CD4-positive, alpha-beta memory T cell (primary cell): ENCODE measurements at regions of chr22 and their contacts with region 1.

Region 1: DNA sequence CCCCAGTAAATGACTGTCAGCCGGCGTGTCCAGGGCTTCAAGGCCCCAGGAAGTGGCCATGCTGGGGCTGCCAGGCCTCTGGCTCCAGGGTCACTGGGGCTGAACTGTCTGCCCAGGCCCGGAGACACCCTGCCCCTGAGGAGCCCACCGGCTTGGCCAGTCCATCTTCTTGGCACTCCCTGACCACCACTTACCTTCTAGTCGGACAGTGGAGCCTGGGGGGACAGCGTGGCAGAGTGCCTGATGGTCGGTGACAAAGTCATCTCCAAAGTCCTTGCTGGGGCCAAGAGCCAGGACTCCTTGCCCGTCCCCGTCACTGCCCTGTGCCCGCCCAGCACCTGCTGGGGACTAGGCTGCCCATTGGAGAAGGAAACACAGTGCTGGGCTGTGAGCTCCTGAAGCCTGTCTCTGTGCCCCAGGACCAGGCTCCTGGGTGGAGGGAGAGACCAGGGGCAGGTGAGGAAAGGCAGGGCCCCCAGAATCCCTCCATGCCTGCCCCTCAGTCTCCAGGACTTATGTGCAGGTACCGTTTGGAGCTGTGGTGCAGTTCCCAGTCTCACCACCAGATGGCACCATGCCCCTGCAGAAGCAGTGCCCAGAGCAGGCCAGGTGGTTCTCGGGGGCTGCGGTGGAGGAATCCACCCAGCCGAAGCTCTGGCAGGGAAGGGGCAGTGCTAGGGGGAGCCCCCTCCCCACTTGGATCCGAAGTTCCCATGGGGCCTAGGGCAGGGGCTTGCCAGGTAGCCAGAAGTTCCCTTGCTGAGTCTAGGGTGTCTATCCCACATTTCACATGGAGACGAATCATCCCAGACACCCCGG is 6.0 kb upstream of the CCDC188 start:
- DNase-seq: peak; percentile 69 to 85 (median 81)
- H3K4me3 ChIP-seq: no peak overlapping the region
- H3K4me3 Mint-ChIP-seq: no peak overlapping the region
- H3K27ac ChIP-seq: no peak overlapping the region
- H3K27ac Mint-ChIP-seq: no peak overlapping the region
- H3K4me1 ChIP-seq: no peaks in the 10 kb centered on the region
- H3K4me1 Mint-ChIP-seq: peaks cover 0 to 5% (median 2%) of the 10 kb centered on the region in 4 donors
- H3K27me3 ChIP-seq: no peaks in the 10 kb centered on the region
- H3K27me3 Mint-ChIP-seq: peaks cover 0 to 3% of the 10 kb centered on the region in 2 donors

Region 2: GRCh38 chr22:19970479-19971275 is 186.1 kb before region 1 on chr22:
- CTCF ChIA-PET with region 1: interaction called, 3 read pairs
- POLR2A ChIA-PET with region 1: no interaction called
- intact Hi-C with region 1: loop called (anchors 1 kb)
- DNase-seq: peak; percentile 64 to 79 (median 69)
- H3K4me3 ChIP-seq: no peak overlapping the region
- H3K4me3 Mint-ChIP-seq: no peak overlapping the region
- H3K27ac ChIP-seq: no peak overlapping the region
- H3K27ac Mint-ChIP-seq: no peak overlapping the region
- H3K4me1 ChIP-seq: peaks cover 12% of the 10 kb centered on the region
- H3K4me1 Mint-ChIP-seq: peaks cover 0 to 7% (median 5%) of the 10 kb centered on the region in 4 donors
- H3K27me3 ChIP-seq: no peaks in the 10 kb centered on the region
- H3K27me3 Mint-ChIP-seq: no peaks in the 10 kb centered on the region

Region 3: GRCh38 chr22:20238536-20238900 is 81.7 kb after region 1 on chr22:
- CTCF ChIA-PET with region 1: interaction called, 14 read pairs
- POLR2A ChIA-PET with region 1: interaction called, 3 read pairs
- intact Hi-C with region 1: no loop called
- DNase-seq: peak; percentile 40 to 57 (median 43)
- H3K4me3 ChIP-seq: no peak overlapping the region
- H3K4me3 Mint-ChIP-seq: peak overlapping the region in 4 of 8 donors; percentile 33 to 56 (median 44)
- H3K27ac ChIP-seq: peak overlapping the region; percentile 43
- H3K27ac Mint-ChIP-seq: peak overlapping the region in 6 of 7 donors; percentile 10 to 81 (median 54)
- H3K4me1 ChIP-seq: peaks cover 67% of the 10 kb centered on the region
- H3K4me1 Mint-ChIP-seq: peaks cover 6 to 37% (median 21%) of the 10 kb centered on the region in 4 donors
- H3K27me3 ChIP-seq: no peaks in the 10 kb centered on the region
- H3K27me3 Mint-ChIP-seq: no peaks in the 10 kb centered on the region

Region 4: DNA sequence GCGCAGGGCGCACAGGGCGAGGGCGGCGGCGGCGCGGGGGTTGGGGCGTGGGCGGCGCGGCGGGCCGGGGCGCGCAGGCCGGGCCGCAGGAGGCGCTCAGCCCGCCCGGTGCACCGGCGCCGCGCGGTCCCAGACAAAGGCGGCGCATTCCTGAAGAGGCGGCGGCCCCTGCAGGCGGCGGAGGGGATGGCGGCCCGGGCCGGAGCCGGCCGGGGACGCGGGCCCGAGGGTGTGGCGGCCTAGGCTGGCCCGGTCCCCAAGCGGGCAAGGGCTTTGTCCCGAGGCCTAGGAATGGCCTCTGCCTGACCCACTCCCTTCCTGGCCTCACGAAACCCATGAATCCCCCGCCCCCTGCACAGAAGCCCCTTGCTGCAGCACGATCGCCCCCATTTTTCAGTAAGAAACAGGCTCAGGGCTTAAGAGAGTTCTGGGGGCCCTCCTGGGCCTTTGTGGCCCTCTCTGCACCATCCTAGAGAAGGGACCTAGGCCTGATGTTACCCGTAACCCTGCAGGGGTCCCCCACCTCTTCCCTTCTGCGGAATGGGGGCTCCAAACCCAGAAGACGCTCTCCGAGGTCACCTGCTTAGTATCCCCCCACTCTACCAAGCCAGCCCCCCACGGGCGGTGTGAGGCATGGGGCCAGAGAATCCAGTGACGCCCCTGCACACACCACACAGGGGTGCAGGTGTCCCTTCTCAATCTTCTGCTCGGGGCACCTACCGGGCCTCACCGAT is 111.6 kb after region 1 on chr22 and contains the start of gene RTN4R:
- CTCF ChIA-PET with region 1: interaction called, 7 read pairs
- POLR2A ChIA-PET with region 1: no interaction called
- intact Hi-C with region 1: loop called (anchors 1 kb)
- DNase-seq: peak; percentile 38 to 59 (median 46)
- H3K4me3 ChIP-seq: no peak within 1 kb of the TSS
- H3K4me3 Mint-ChIP-seq: peak within 1 kb of the TSS; percentile 68 to 84 (median 78)
- H3K27ac ChIP-seq: no peak within 1 kb of the TSS
- H3K27ac Mint-ChIP-seq: peak within 1 kb of the TSS in 3 of 7 donors; percentile 46 to 77 (median 74)
- H3K4me1 ChIP-seq: peaks cover 8% of the 10 kb centered on the region
- H3K4me1 Mint-ChIP-seq: peaks cover 0 to 12% (median 6%) of the 10 kb centered on the region in 4 donors
- H3K27me3 ChIP-seq: no peaks in the 10 kb centered on the region
- H3K27me3 Mint-ChIP-seq: peaks cover 0 to 1% of the 10 kb centered on the region in 2 donors
- total RNA-seq, gene RTN4R: 2.1 to 2.7 TPM

Region 5: DNA sequence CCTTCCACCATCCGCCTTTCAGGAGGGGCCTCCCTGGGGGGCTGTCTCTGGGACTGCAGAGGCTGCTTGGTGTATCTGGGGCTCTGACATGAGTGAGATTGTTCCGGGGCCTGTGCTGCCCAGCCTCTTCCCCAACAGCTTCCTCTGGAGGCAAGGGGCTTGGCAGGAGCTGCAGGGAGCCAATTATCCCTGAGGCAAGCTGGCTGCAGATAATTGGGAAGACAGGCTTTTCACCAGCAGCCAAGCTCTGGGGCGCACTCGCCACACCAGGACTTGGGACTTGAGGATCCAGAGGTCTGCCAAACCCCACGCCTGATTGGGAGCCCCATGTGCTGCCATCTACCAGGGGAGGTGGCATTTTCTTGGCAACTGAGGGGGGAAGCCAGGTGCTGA is 126.8 kb after region 1 on chr22:
- CTCF ChIA-PET with region 1: interaction called, 31 read pairs
- POLR2A ChIA-PET with region 1: no interaction called
- intact Hi-C with region 1: loop called (anchors 1 kb)
- DNase-seq: no peak
- H3K4me3 ChIP-seq: no peak overlapping the region
- H3K4me3 Mint-ChIP-seq: no peak overlapping the region
- H3K27ac ChIP-seq: no peak overlapping the region
- H3K27ac Mint-ChIP-seq: no peak overlapping the region
- H3K4me1 ChIP-seq: no peaks in the 10 kb centered on the region
- H3K4me1 Mint-ChIP-seq: peaks cover 0 to 2% (median 0%) of the 10 kb centered on the region in 4 donors
- H3K27me3 ChIP-seq: no peaks in the 10 kb centered on the region
- H3K27me3 Mint-ChIP-seq: peaks cover 0 to 2% of the 10 kb centered on the region in 2 donors

Region 6: GRCh38 chr22:20531315-20532201 is 374.7 kb after region 1 on chr22:
- CTCF ChIA-PET with region 1: no interaction called
- POLR2A ChIA-PET with region 1: no interaction called
- intact Hi-C with region 1: no loop called
- DNase-seq: no peak
- H3K4me3 ChIP-seq: no peak overlapping the region
- H3K4me3 Mint-ChIP-seq: peak overlapping the region in 4 of 8 donors; percentile 23 to 78 (median 38)
- H3K27ac ChIP-seq: peak overlapping the region; percentile 23
- H3K27ac Mint-ChIP-seq: peak overlapping the region in 6 of 7 donors; percentile 41 to 90 (median 82)
- H3K4me1 ChIP-seq: peaks cover 65% of the 10 kb centered on the region
- H3K4me1 Mint-ChIP-seq: peaks cover 51 to 82% (median 59%) of the 10 kb centered on the region in 4 donors
- H3K27me3 ChIP-seq: no peaks in the 10 kb centered on the region
- H3K27me3 Mint-ChIP-seq: no peaks in the 10 kb centered on the region

Region 7: DNA sequence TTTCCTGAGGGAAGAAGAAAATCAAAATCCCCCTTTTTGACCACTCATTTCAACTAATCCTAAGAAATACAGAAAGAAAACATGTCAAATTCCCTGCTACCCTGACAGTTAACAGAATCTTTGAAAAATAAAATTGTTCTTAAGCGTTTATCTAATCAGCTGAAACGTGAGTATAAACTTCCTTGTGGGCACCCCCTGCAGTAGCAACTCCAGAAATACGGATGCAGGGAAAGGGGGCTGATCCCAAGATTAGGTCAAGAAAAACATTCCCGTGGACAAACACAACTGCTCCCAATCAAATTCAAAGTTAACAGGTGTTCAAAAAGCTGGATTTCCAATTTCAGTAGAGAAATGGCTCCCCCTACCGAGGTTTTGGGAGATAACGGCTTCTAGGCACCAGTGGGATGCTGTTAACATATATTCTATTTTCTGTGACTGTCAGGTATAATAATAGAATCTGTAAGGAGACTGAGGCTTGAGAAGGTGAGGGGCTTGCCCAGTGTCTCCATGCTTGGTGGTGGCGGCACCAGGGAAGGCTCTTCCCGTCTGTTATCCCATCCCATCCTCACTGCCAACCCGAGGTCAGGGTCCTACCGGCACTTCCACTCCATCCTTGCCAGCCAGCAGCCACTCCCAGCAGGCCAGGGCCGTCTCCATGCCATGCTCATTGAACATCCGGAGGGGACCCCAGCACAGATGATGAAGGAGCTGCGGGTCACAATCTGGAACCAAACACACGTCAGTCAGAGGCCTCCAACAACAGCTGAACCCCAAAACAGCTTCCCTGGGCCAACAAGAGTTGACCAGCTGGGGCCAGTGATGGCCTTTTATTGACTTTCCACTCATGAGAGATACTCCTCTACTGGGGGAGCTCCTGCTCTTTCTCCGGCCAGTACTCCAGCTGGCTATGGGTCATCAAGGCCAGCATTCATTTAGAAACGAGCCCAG is 585.1 kb after region 1 on chr22:
- CTCF ChIA-PET with region 1: no interaction called
- POLR2A ChIA-PET with region 1: no interaction called
- intact Hi-C with region 1: loop called (anchors 5 kb)
- DNase-seq: peak; percentile 41 to 50 (median 47)
- H3K4me3 ChIP-seq: no peak overlapping the region
- H3K4me3 Mint-ChIP-seq: no peak overlapping the region
- H3K27ac ChIP-seq: no peak overlapping the region
- H3K27ac Mint-ChIP-seq: peak overlapping the region in 1 of 7 donors; percentile 62
- H3K4me1 ChIP-seq: no peaks in the 10 kb centered on the region
- H3K4me1 Mint-ChIP-seq: peaks cover 0 to 2% (median 0%) of the 10 kb centered on the region in 4 donors
- H3K27me3 ChIP-seq: no peaks in the 10 kb centered on the region
- H3K27me3 Mint-ChIP-seq: no peaks in the 10 kb centered on the region